ENCODE measurements at regions of chr10 and their contacts with region 1.

Region 1: DNA sequence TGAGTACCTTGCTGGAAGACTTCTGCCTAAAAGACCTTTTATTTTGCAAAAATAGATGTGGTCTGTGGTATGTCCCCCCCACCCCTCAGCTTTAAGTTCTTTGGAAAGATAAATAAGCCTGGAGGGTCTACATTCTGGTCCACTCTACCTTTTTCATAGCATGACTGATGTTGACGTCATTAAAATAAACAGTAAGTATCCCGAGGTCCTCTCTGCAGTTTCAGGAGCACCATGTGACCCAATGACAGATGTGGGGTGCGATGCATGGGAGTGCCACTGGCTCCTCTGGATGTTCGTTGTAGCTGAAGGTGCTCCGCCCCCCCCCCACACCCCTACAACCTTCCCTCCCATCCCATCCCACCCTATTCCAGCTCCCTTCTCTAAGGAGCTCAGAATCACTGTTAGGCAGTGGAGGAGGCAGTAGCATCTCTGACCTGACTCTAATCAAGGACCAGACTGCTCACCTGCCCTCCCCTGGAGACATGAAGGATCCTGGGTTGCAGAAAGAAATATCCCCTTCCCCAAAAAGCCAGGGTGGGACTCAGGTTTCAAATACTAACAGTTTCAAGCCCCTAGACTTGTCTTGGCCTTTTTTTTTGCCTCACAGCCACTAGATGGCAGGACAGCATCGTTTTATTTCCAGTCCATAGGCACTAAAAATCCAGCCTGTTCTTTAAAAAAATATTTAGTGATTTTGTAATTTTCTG is 25.1 kb downstream of the CASP7 start:
- DNase-seq: peak; percentile 59
- H3K4me3 Mint-ChIP-seq: no peak overlapping the region
- H3K27ac Mint-ChIP-seq: no peak overlapping the region
- H3K4me1 Mint-ChIP-seq: peaks cover 5% of the 10 kb centered on the region
- H3K27me3 Mint-ChIP-seq: no peaks in the 10 kb centered on the region
- CTCF ChIP-seq: peak; percentile 49

Region 2: DNA sequence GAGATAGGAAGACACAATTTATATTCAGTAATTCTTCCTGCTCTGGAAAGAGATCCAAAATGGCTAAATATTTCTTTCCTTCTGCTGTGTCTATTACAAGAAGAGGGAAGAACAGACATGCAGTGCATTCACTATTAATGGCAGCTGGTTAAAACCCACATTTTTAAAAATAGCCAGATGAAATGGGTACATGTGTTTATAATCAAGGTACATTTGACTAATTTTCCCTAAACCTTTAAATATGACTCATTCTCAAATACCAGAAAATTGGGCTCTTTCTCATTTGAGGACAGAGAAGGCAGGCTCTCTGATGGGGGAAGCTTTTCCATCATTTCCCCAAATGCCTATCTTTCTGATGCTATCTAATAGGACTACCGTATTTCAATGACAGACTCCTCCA is 367.6 kb before region 1 on chr10:
- CTCF ChIA-PET with region 1: no interaction called
- POLR2A ChIA-PET with region 1: no interaction called
- intact Hi-C with region 1: no loop called
- DNase-seq: no peak
- H3K4me3 Mint-ChIP-seq: no peak overlapping the region
- H3K27ac Mint-ChIP-seq: no peak overlapping the region
- H3K4me1 Mint-ChIP-seq: no peaks in the 10 kb centered on the region
- H3K27me3 Mint-ChIP-seq: peaks cover 18% of the 10 kb centered on the region
- CTCF ChIP-seq: no peak

Region 3: DNA sequence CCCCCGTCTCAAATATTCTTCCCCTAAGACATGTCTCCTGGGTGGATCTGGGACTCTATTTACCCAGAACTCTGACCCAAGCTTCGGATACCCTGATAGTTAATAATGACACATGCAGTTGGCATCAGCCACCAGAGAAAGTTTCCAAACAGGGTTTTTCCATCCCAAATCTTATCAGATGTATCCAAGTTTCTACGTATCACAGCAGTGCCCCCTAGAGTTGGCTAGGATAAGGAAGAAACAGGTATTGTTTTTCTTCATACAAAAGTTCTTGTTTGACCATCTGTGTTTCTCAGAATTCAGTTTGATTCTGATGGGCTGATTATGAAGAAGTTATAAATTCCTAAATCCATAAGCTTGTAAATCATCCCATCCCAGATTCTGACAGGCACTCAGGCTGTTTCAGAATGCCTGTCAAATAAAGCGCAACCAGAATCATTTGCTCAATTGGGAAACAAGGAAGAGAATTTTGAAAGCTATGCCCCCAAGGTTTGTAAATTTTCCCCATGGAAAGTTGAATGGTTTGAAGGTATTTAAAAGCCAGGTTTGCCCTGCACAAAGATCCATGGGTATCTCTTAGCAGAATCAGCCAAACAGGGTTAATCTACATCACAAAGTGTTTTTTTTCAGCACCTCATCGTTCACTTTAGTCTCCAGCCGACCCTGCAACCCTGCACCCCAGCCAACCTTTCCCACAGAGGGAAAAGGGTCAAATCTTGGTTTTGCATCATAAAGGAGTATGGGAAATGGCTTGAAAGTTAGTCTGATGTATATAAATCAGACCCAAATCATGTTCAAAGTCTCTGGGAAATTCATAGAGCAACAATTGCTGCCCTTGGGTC is 88.3 kb before region 1 on chr10:
- CTCF ChIA-PET with region 1: no interaction called
- POLR2A ChIA-PET with region 1: no interaction called
- intact Hi-C with region 1: no loop called
- DNase-seq: peak; percentile 29
- H3K4me3 Mint-ChIP-seq: no peak overlapping the region
- H3K27ac Mint-ChIP-seq: no peak overlapping the region
- H3K4me1 Mint-ChIP-seq: no peaks in the 10 kb centered on the region
- H3K27me3 Mint-ChIP-seq: peaks cover 56% of the 10 kb centered on the region
- CTCF ChIP-seq: peak; percentile 21

Region 4: GRCh38 chr10:113716109-113716910 is 11.5 kb after region 1 on chr10:
- CTCF ChIA-PET with region 1: interaction called, 17 read pairs
- POLR2A ChIA-PET with region 1: interaction called, 3 read pairs
- intact Hi-C with region 1: no loop called
- DNase-seq: no peak
- H3K4me3 Mint-ChIP-seq: no peak overlapping the region
- H3K27ac Mint-ChIP-seq: no peak overlapping the region
- H3K4me1 Mint-ChIP-seq: no peaks in the 10 kb centered on the region
- H3K27me3 Mint-ChIP-seq: no peaks in the 10 kb centered on the region
- CTCF ChIP-seq: no peak

Region 5: DNA sequence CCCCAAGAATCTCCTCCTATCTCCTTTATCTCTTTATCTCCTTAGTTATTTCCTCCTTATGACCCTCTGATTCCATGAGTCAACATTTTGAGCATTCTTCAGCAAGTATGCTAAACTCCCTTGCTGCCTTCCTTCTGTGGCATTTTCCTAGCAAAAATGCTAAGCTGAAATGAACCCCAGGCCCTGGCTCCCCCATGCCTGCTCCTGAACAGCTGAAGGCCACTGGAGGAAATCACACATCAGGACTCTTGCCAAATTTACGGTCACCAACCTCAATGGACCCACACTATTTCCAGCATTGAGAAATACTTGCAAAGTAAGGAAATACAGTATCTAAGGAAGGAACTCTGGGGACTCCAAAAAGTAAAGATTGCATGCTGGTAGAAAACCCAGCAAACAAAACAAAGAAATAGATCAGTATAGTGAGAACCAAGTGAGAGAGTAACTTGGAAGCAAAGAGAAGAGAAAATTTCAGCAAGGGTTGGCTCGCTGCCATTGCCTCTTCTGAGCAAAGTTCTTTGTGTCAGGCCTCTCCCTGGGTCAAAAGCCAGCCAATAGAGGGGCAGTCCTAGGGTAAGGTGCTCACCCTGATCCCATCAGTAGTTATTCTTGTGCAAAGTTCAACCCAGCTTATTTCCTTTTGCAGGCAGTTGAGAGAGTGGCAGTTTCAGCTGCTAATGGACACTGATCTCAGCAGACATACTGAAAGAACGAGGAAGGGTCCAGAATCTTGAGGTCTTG is 41.6 kb after region 1 on chr10:
- CTCF ChIA-PET with region 1: no interaction called
- POLR2A ChIA-PET with region 1: no interaction called
- intact Hi-C with region 1: no loop called
- DNase-seq: no peak
- H3K4me3 Mint-ChIP-seq: no peak overlapping the region
- H3K27ac Mint-ChIP-seq: no peak overlapping the region
- H3K4me1 Mint-ChIP-seq: no peaks in the 10 kb centered on the region
- H3K27me3 Mint-ChIP-seq: peaks cover 13% of the 10 kb centered on the region
- CTCF ChIP-seq: no peak

Region 6: GRCh38 chr10:113767222-113767621 is 62.4 kb after region 1 on chr10:
- CTCF ChIA-PET with region 1: no interaction called
- POLR2A ChIA-PET with region 1: no interaction called
- intact Hi-C with region 1: no loop called
- DNase-seq: no peak
- H3K4me3 Mint-ChIP-seq: no peak overlapping the region
- H3K27ac Mint-ChIP-seq: no peak overlapping the region
- H3K4me1 Mint-ChIP-seq: no peaks in the 10 kb centered on the region
- H3K27me3 Mint-ChIP-seq: peaks cover 53% of the 10 kb centered on the region
- CTCF ChIP-seq: no peak

Region 7: GRCh38 chr10:113854011-113854760 is 149.4 kb after region 1 on chr10 and contains the starts of genes DCLRE1A and NHLRC2:
- CTCF ChIA-PET with region 1: interaction called, 3 read pairs
- POLR2A ChIA-PET with region 1: no interaction called
- intact Hi-C with region 1: loop called (anchors 5 kb)
- DNase-seq: peak; percentile 82
- H3K4me3 Mint-ChIP-seq: peak within 1 kb of the TSS; percentile 98
- H3K27ac Mint-ChIP-seq: peak within 1 kb of the TSS; percentile 98
- H3K4me1 Mint-ChIP-seq: peaks cover 14% of the 10 kb centered on the region
- H3K27me3 Mint-ChIP-seq: no peaks in the 10 kb centered on the region
- CTCF ChIP-seq: no peak
- total RNA-seq, gene DCLRE1A: 9.0 and 9.2 TPM in 2 replicates
- total RNA-seq, gene NHLRC2: 39.8 and 40.3 TPM in 2 replicates

Region 8: DNA sequence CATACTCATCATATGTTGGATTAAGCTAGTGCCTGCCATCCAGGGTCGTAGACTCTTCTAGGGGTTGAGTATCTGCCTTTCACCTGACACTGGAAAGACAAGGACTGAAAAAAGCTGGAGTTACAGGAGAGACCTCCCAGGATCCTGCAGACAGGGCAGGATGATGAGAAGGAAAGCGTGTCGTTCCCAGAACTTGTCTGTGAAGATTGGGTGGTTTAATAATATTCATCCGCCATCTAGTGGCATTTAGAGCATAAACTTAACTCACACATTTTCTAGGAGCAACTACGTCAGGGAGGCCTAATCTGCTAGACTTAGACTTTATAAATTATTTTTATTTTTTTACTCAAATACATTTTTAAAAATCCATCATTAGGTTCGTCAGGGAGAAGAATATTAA is 398.5 kb after region 1 on chr10:
- CTCF ChIA-PET with region 1: interaction called, 9 read pairs
- POLR2A ChIA-PET with region 1: no interaction called
- intact Hi-C with region 1: loop called (anchors 1 kb)
- DNase-seq: peak; percentile 66
- H3K4me3 Mint-ChIP-seq: no peak overlapping the region
- H3K27ac Mint-ChIP-seq: no peak overlapping the region
- H3K4me1 Mint-ChIP-seq: no peaks in the 10 kb centered on the region
- H3K27me3 Mint-ChIP-seq: no peaks in the 10 kb centered on the region
- CTCF ChIP-seq: peak; percentile 46